Naive thymus-derived CD4-positive, alpha-beta T cell (primary cell): ENCODE measurements at regions of chr6 and their contacts with region 1.

Region 1: DNA sequence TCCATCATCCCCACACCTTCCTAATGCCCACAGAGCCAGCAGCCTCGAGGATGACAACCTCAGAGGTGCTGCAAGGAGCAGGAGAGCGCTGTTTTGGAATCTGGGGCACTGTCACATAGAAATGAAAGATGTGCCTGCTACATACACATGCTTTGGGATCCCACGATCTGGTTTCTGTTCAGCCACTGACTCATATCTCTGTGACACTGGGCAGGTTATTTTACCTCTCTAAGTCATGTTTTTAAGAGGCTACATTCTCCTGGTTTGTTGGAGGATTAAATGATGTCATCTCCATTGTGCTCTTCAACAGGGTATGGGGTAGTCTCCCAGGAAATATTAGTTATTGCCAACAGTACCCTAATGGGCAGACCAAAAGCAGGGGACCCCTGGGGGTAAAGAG is 32.6 kb upstream of the TAB2 start:
- DNase-seq: no peak
- ATAC-seq: no peak
- H3K4me3 ChIP-seq: no peak overlapping the region
- H3K4me3 Mint-ChIP-seq: peak overlapping the region in 1 of 10 donors; percentile 54
- H3K27ac ChIP-seq: no peak overlapping the region
- H3K27ac Mint-ChIP-seq: peak overlapping the region in 1 of 9 donors; percentile 63
- H3K4me1 ChIP-seq: no peaks in the 10 kb centered on the region
- H3K4me1 Mint-ChIP-seq: peaks cover 0 to 37% (median 2%) of the 10 kb centered on the region in 7 donors
- H3K27me3 ChIP-seq: no peaks in the 10 kb centered on the region
- H3K27me3 Mint-ChIP-seq: no peaks in the 10 kb centered on the region

Region 2: DNA sequence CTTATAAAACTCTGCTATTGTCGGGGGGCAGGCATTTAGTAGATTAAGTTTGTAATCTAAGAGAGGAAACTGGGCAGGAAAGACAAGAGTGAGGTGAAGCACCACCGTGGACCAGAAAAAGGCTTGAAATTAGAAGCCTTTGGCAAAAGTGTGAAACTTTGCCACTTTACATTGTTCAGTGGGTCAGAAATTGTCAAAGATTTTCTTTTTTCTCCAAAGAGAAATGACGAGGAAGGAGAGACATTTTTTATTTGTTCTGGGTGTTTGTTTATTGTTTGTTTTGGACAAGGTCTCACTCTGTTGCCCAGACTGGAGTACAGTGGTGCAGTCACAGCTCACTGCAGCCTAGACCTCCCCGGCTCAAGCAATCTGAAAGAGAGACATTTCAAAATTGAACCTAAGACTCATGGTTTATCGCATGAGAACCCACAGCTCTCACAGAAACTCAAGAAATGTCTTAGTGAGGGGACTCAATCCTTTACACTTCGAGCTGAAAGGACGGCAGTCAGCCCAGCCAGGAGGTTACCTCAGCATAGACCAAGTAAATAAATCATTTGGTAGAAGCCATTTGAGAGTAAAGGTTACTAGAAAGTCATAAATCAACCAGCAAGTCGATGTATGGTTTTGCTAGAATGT is 230.2 kb before region 1 on chr6:
- CTCF ChIA-PET with region 1: no interaction called
- POLR2A ChIA-PET with region 1: no interaction called
- intact Hi-C with region 1: no loop called
- DNase-seq: no peak
- ATAC-seq: no peak
- H3K4me3 ChIP-seq: no peak overlapping the region
- H3K4me3 Mint-ChIP-seq: peak overlapping the region in 1 of 10 donors; percentile 8
- H3K27ac ChIP-seq: no peak overlapping the region
- H3K27ac Mint-ChIP-seq: peak overlapping the region in 1 of 9 donors; percentile 28
- H3K4me1 ChIP-seq: peaks cover 0 to 13% of the 10 kb centered on the region in 2 donors
- H3K4me1 Mint-ChIP-seq: peaks cover 5 to 46% (median 12%) of the 10 kb centered on the region in 7 donors
- H3K27me3 ChIP-seq: no peaks in the 10 kb centered on the region
- H3K27me3 Mint-ChIP-seq: no peaks in the 10 kb centered on the region

Region 3: DNA sequence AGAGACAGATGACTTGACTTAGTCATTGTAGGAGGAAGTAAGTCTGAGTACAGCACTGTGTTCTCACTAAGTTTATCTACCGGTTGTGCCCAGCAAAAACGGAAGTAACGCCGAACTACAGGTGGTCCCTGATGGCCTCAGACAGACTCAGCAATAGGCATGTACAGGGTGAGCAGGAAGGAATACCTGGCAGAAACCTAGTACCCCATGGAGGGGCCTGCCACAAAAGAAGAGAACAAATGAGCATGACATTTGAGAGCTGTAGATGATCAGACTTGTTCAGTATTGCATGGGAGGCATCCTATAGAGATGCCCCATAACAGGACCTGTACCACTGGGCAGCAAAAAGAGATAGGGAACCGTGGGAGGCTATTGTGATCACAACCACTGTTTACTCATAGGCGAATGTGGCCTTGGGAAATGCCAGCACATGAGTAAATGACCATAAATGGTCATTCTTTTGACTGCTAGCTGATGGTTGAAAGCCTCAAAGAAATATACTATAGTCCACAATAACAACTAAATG is 73.8 kb before region 1 on chr6:
- CTCF ChIA-PET with region 1: no interaction called
- POLR2A ChIA-PET with region 1: no interaction called
- intact Hi-C with region 1: no loop called
- DNase-seq: peak in 1 of 9 donors; percentile 34
- ATAC-seq: peak; percentile 71
- H3K4me3 ChIP-seq: no peak overlapping the region
- H3K4me3 Mint-ChIP-seq: peak overlapping the region in 8 of 10 donors; percentile 15 to 70 (median 46)
- H3K27ac ChIP-seq: no peak overlapping the region
- H3K27ac Mint-ChIP-seq: peak overlapping the region in 5 of 9 donors; percentile 17 to 91 (median 59)
- H3K4me1 ChIP-seq: peaks cover 26 to 34% of the 10 kb centered on the region in 2 donors
- H3K4me1 Mint-ChIP-seq: peaks cover 6 to 28% (median 14%) of the 10 kb centered on the region in 7 donors
- H3K27me3 ChIP-seq: no peaks in the 10 kb centered on the region
- H3K27me3 Mint-ChIP-seq: no peaks in the 10 kb centered on the region

Region 4: DNA sequence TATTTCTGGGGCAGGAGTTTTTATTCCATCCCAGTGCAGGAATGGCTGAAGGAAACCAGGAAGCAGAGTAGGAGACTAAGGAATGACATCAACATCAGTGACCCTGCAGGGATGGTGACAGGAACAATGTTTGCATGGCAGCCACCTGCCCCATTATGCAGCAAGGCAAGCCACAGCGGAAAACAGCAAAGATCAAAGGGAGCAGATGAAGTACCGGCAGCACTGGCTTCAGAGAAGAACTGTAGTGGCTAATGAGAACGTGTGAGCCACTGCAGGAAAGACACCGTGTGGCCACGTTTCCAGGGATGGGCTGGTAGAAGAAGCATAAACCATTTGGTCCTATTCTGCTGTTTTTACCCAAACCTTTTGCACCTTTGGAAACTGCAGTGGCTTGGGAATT is 20.3 kb before region 1 on chr6:
- CTCF ChIA-PET with region 1: no interaction called
- POLR2A ChIA-PET with region 1: no interaction called
- intact Hi-C with region 1: loop called in 1 of 2 experiments (anchors 2 kb)
- DNase-seq: peak in 8 of 9 donors; percentile 42 to 65 (median 50)
- ATAC-seq: peak; percentile 69
- H3K4me3 ChIP-seq: no peak overlapping the region
- H3K4me3 Mint-ChIP-seq: peak overlapping the region; percentile 29 to 76 (median 67)
- H3K27ac ChIP-seq: no peak overlapping the region
- H3K27ac Mint-ChIP-seq: peak overlapping the region; percentile 49 to 87 (median 74)
- H3K4me1 ChIP-seq: peaks cover 0 to 54% of the 10 kb centered on the region in 2 donors
- H3K4me1 Mint-ChIP-seq: peaks cover 33 to 59% (median 52%) of the 10 kb centered on the region in 7 donors
- H3K27me3 ChIP-seq: no peaks in the 10 kb centered on the region
- H3K27me3 Mint-ChIP-seq: no peaks in the 10 kb centered on the region